ENCODE measurements at regions of chr4 and their contacts with region 1.

Region 1: DNA sequence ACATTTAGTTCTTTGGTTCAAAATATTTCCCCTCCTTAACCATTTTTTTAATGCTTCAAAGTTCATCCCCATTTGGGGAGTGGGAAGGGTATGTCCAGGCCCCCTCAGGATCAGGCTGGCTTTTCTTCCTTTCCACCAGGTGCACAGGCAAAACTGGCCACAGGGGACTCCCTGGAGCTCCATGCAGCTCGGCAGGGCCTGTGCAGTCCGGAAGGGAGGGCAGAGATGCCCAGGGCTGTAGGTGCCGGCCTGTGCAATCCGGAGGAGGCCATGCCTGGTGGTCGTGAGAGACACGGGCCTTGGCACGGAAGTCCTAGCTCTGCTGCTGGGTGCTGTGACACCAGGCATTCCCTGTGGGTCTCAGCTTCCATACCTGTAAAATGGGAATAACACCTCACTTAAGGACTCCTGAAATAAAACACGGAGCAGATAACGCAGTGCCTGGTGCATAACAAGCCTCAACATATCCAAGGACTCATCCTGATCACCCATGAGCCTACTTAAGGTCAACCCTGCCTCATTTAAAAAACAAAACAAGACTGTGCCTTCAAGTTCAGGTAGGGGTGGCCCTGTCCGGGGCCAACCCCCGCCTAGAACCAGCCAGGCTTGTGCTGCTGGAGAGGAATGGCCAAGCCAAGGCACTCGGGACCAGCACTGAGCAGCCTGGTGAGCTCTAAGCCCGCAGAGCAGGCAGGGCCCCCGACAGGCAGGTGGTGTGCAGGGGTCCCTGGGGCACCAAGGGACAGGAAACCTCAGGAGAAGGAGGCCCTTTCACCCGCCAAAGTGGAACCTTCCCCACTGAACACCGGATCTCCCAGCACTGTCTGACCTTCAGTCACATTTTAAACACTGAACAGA is 21.2 kb upstream of the CYP4V2 start:
- DNase-seq: no peak

Region 2: DNA sequence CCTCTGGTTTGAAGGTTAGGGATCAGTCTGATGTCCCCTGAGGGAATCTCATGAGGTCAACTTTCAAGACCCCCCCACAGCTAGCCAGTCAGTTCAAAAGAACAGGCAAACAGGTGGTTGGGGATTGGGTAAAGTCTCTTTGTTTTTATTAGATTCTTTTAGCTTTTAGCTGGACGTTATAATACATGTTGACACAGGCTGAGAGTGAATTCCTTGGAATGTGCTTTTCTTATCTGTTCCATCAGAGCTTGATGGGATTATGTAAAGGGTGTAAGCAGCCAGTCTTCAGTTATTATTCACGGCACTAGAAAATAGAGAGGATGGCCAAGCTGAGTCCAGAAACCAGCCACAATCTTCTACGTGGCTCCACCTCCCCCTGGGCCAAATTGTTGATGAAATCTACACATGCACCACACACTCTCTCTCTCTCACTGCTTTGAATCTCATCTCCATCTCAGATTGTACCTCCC is 1973.3 kb before region 1 on chr4:
- intact Hi-C with region 1: loop called in 1 of 2 experiments (anchors 5 kb)
- DNase-seq: no peak

Measured in posterior vena cava (tissue), 2 donors.